ENCODE measurements at regions of chr4 and their contacts with region 1.

Region 1: GRCh38 chr4:126223784-126224407 is 909.1 kb downstream of the FAT4 start:
- DNase-seq: peak; percentile 1
- ATAC-seq: no peak
- H3K4me3 ChIP-seq: no peak overlapping the region
- H3K27ac ChIP-seq: no peak overlapping the region
- H3K4me1 ChIP-seq: no peaks in the 10 kb centered on the region
- H3K27me3 ChIP-seq: no peaks in the 10 kb centered on the region; a peak in 1 of 5 replicates
- CTCF ChIP-seq: 0 out of 2 replicates have a peak, but pooled peaks have one; percentile 13
- EP300 ChIP-seq: no peak
- POLR2A ChIP-seq: no peak
- RAD21 ChIP-seq: no peak

Region 2: DNA sequence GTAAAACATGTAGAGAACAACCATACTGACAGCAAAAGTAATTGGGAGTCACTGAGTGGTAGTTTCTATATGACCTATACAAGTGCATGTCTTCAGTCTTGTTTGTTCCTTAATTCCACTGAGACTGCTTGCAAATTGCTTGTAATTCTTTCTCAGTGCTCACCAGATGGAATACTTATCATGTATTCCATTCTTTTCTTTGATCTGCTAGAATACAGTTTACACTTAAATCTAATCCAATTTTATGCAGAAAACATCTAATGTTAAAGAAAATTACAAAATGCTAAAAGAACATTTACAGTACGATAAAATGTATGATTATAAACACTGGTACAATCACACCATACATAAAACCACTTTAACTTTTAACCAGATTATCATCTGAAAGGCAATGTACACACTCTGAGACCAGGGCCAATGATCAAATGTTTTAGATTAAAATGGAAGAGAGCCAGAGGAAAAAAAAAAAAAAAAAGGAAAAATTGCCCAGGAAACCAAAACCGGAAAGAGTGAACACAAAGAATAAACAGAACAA is 167.7 kb before region 1 on chr4:
- CTCF ChIA-PET with region 1: no interaction called
- POLR2A ChIA-PET with region 1: no interaction called
- in situ Hi-C with region 1: no loop called
- intact Hi-C with region 1: no loop called
- DNase-seq: no peak
- ATAC-seq: no peak
- H3K4me3 ChIP-seq: no peak overlapping the region
- H3K27ac ChIP-seq: no peak overlapping the region
- H3K4me1 ChIP-seq: no peaks in the 10 kb centered on the region
- H3K27me3 ChIP-seq: no peaks in the 10 kb centered on the region
- CTCF ChIP-seq: no peak
- EP300 ChIP-seq: no peak
- POLR2A ChIP-seq: no peak
- RAD21 ChIP-seq: no peak

Region 3: DNA sequence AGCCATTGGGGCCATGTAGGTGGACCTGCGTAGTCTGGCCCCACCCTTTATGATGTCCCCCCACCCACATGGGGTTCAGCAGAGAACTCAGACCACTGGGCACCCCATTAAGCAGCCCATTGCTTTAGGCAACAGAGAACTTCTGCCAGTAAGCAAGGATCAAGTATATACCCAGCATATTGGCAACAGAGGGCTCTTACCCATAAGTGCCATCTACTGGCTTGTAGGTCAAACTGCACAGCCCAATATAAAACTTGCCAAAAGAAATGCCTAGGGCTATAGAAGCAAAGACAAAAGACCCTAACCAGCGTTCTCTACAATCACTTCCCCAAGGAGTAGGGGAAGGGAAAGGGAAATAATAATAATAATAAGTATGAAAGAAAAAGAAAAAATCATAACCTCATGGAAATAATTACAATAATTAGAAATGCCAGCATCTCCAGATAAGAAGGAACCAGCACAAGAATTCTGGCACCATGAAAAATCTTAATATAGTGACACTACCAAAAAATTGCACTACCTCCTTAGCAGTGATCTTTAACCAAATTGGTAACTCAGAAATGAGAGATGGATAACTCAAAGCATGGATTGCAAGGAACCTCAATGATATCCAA is 181.6 kb after region 1 on chr4:
- CTCF ChIA-PET with region 1: no interaction called
- POLR2A ChIA-PET with region 1: no interaction called
- in situ Hi-C with region 1: no loop called
- intact Hi-C with region 1: loop called (anchors 10 kb)
- DNase-seq: peak; percentile 6
- ATAC-seq: peak; percentile 64
- H3K4me3 ChIP-seq: no peak overlapping the region
- H3K27ac ChIP-seq: no peak overlapping the region
- H3K4me1 ChIP-seq: no peaks in the 10 kb centered on the region
- H3K27me3 ChIP-seq: no peaks in the 10 kb centered on the region
- CTCF ChIP-seq: peak; percentile 23; the same call in 1 of the 2 replicates
- EP300 ChIP-seq: no peak
- POLR2A ChIP-seq: no peak
- RAD21 ChIP-seq: no peak

Region 4: GRCh38 chr4:126604268-126604867 is 380.5 kb after region 1 on chr4:
- CTCF ChIA-PET with region 1: no interaction called
- POLR2A ChIA-PET with region 1: no interaction called
- in situ Hi-C with region 1: no loop called
- intact Hi-C with region 1: loop called (anchors 5 kb)
- DNase-seq: peak; percentile 18
- ATAC-seq: peak; percentile 76
- H3K4me3 ChIP-seq: no peak overlapping the region
- H3K27ac ChIP-seq: no peak overlapping the region
- H3K4me1 ChIP-seq: no peaks in the 10 kb centered on the region
- H3K27me3 ChIP-seq: no peaks in the 10 kb centered on the region
- CTCF ChIP-seq: peak; percentile 62
- EP300 ChIP-seq: no peak
- POLR2A ChIP-seq: no peak
- RAD21 ChIP-seq: no peak

Region 5: DNA sequence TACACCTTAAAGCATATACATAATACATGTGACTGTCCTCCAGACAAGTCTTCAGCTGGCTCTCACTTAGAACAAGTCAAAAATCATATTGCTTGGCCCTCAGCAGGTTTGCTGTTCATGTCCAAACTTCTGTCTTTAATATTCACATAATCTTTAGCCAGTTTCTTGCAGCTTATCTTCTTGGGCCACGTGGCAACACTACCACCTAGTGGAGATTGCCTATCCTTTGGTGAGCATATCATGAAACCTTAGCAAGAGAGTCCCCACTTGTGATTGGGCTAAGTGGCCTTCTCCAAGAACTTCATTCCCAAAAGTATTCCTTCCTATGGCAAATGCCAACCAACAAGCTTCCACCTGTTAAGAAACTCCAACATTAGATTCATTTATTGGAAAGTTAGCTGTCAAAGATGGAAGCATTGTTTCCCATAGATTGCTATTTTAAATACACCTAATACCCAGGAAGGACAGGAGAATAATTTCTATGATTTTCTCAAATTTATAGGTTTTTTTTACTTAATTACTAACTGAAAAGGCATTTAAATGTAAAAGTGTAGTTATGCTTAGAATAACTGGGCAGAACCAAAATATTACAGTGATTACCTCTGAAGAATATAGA is 1176.9 kb after region 1 on chr4:
- CTCF ChIA-PET with region 1: no interaction called
- POLR2A ChIA-PET with region 1: no interaction called
- in situ Hi-C with region 1: no loop called
- intact Hi-C with region 1: loop called (anchors 2 kb)
- DNase-seq: peak; percentile 66
- ATAC-seq: peak; percentile 91
- H3K4me3 ChIP-seq: no peak overlapping the region
- H3K27ac ChIP-seq: no peak overlapping the region
- H3K4me1 ChIP-seq: no peaks in the 10 kb centered on the region
- H3K27me3 ChIP-seq: no peaks in the 10 kb centered on the region
- CTCF ChIP-seq: peak; percentile 83
- EP300 ChIP-seq: no peak
- POLR2A ChIP-seq: no peak
- RAD21 ChIP-seq: no peak; the same call in 1 of the 2 replicates

Measured in HepG2 (cell line).